ENCODE measurements at regions of chr12 and their contacts with region 1.

Region 1: DNA sequence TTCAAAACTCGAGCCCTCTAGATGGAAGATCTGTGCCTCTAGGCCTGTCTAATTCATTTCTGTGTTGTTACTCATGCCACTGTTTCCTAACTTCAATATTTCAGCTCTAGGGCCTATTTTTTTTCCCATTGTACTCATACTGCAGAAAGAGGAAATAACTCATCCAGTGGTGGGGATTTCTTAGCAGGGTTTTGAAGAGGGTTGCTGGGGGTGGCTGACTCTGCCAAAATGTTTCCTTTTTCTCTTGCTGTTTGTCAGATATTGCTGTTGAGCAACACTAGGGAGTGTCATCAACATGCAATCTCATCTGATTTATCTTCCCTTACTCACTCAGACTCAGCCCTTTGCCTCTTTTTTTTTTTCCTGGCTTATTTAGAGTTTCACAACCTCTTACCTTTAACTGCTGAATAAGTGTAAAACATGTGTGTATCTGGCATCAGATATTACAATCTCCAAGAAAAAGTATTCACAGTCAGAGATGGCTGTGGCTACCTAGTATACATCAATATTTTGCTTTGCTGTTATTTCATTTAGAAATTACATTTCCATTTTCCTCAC is 189.5 kb downstream of the DUSP6 start:
- DNase-seq: peak; percentile 86
- H3K4me3 Mint-ChIP-seq: no peak overlapping the region
- H3K27ac Mint-ChIP-seq: no peak overlapping the region
- H3K4me1 Mint-ChIP-seq: peaks cover 17% of the 10 kb centered on the region
- H3K27me3 Mint-ChIP-seq: no peaks in the 10 kb centered on the region

Region 2: DNA sequence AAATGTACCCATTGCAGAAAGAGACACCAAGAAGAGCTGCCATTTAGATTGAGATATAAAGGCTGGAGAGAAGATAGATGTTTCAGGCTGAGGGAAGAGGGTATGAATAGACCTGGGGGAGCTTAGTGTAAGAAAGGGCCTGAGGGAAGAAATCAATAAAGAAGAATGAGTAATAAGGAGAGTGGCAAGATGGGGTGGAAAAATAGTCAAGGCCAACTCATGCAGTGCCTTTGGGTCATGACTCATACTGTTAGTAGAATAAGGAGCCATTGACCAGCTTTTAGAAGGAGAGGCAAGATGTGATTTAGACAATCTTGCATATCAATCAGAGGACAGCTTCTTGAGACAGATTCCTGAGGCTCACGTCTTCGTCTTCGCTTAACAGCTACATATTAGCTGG is 98.0 kb before region 1 on chr12:
- intact Hi-C with region 1: loop called (anchors 2 kb)
- DNase-seq: no peak
- H3K4me3 Mint-ChIP-seq: no peak overlapping the region
- H3K27ac Mint-ChIP-seq: no peak overlapping the region
- H3K4me1 Mint-ChIP-seq: peaks cover 17% of the 10 kb centered on the region
- H3K27me3 Mint-ChIP-seq: no peaks in the 10 kb centered on the region

Region 3: DNA sequence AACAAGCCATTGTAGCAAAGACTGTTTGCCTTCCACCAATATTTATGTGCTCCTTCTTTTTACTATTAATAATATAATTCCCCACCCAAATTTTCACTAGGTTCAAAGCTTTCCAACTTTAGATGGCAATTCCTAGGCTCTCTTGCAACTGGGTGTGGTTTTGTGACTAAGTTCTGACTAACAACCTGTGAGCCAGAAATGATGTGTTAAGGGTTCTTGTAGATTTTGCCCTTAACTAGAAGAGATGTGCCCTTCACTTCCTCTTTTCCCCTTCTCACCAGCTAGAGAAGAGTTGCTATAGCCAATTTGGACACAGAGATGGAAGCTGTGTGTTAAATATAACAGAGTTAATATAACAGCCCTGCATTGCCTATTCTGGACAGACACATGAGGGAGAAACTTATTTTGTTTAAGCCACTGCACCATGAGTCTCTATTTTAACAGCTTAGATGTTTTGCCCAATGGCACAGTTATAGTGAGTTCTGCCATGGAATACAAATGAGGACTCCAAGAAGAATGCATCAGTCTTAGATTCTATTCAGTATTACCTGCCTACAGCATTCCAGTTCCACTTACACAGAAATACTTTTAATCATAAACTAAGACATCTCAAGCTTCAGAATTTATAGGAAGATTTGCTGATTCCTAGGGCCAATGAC is 26.7 kb before region 1 on chr12:
- intact Hi-C with region 1: loop called (anchors 1 kb)
- DNase-seq: no peak
- H3K4me3 Mint-ChIP-seq: no peak overlapping the region
- H3K27ac Mint-ChIP-seq: no peak overlapping the region
- H3K4me1 Mint-ChIP-seq: peaks cover 19% of the 10 kb centered on the region
- H3K27me3 Mint-ChIP-seq: no peaks in the 10 kb centered on the region

Region 4: DNA sequence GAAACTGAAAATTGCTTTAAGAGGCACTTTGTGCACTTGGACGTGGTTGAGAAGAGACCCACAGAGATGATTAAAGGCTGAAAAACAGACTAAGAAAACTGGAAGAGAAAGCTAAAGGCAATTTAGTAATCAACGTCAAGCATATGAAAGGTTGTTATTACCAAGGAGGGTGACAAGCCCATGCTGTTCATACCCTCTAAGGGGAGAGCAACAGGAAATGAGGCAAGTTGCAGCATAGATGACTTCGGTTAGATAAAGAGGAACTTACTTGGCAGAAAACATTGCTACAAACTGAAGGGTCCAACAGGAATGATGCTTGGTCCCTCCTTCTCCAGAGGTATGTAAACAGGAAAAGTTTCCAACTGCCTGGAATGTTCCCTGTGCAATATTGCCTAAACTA is 81.8 kb after region 1 on chr12:
- intact Hi-C with region 1: loop called (anchors 1 kb)
- DNase-seq: peak; percentile 82
- H3K4me3 Mint-ChIP-seq: peak overlapping the region; percentile 52
- H3K27ac Mint-ChIP-seq: peak overlapping the region; percentile 84
- H3K4me1 Mint-ChIP-seq: peaks cover 45% of the 10 kb centered on the region
- H3K27me3 Mint-ChIP-seq: no peaks in the 10 kb centered on the region

Region 5: DNA sequence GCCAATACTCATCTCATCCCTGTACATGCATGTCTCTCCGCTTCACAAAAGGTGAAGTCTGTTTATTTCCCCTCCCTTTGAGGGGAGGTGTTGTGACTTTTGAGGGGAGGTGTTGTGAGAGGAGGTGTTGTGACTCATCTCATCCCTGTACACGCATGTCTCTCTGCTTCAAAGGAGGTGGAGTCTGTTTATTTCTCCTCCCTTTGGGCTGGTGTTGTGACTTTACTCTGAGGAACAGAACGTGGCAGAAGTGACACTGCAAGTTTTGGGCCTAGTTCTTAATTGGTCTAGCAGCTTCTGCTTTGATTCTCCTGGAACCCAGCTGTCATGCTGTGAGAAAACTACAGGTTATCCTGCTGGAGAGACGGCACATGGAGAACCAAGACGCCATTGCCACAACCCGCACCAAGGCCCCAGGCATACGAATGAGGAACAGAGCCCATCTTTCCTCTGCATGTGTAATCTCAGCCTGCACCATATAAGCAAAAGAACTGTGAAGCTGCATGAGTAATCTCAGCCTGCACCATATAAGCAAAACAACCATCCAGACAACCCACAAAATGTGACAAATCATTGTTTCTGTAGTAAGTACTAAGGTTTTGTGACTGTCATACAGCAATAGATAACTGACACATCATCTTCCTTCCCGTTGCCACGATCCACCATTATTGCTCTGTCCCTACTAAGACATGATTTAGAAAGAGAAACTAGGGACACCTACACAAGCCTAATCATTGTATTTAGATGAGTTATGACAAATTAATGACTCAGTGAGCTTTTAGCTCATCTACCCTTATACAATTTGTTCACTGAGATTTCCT is 331.8 kb after region 1 on chr12:
- intact Hi-C with region 1: loop called (anchors 1 kb)
- DNase-seq: peak; percentile 72
- H3K4me3 Mint-ChIP-seq: peak overlapping the region; percentile 44
- H3K27ac Mint-ChIP-seq: peak overlapping the region; percentile 96
- H3K4me1 Mint-ChIP-seq: peaks cover 14% of the 10 kb centered on the region
- H3K27me3 Mint-ChIP-seq: no peaks in the 10 kb centered on the region

Measured in activated CD4-positive, alpha-beta T cell treated with anti-CD3 and anti-CD28 coated beads, Interleukin-2, amount 10 ng/mL, durations not matched to agents 24 days and 14 days (primary cell).